ENCODE measurements at regions of chr13 and their contacts with region 1.

Region 1: DNA sequence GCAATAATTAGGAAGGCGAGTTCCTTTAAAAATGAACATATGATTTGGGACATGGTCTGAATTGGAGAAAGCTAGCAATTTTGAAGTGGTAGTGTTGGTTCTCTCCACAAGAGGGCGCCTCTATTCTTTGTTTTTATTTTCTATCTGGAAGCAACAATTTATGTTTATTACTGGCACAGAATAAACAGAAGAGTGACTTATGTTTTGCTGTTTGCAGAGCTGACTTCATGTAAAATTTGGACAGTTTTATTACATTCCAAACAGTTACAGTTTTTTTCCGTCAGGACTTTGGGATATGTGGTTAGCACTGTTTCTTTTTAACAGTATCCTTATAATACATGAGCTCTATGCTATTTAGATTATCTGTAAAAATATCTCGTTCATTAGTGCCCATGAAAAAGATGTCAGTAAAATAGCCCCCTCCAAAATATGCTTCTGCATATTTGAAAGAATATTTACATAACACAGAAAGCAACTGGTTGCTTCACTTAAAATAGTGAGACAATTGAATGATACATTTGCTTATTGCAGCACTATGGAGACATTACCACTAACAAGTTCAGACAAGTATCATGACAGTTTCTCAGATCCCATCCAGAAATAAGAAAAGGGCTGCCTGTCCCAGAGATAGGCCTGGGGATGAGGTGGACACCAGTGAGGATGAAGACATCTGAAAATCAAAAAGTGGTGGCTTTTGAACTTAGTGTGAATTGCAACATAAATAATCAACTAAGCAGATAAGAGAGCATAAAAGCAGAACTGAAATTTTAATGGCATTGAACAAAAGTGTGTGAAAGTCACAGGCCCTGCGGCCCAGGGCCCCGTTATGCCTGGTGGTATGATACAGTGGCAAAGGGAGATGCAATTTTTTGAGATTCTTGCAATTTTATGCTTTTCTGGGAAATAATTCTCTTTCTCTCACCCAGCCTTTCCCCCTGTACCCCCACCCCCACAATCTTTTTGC is 32.3 kb upstream of the FGF9 start:
- DNase-seq: no peak
- H3K4me3 ChIP-seq: no peak overlapping the region
- H3K27ac ChIP-seq: no peak overlapping the region
- H3K4me1 ChIP-seq: no peaks in the 10 kb centered on the region
- H3K27me3 ChIP-seq: no peaks in the 10 kb centered on the region
- CTCF ChIP-seq: peak; percentile 22 to 54 (median 40)
- EP300 ChIP-seq: no peak
- POLR2A ChIP-seq: no peak

Region 2: DNA sequence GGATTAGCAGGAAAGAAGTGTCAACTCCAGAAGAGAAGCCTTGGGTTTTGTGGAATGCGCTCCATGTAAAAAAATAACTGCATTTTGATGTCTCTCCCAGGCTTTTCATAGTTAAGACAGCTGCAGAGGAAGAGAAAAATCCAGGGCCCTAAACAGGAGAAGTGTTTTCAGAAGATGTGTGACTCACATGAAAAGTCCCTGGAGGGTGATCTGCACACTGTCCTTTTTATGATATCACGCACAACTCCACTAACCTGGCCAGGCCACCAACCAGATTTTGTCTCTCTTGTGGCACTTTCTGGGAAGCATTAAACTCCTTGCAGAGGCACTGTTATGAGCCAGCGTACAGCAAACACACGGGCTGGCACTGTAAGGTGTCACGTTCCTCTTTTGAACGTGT is 299.6 kb after region 1 on chr13:
- intact Hi-C with region 1: no loop called
- DNase-seq: no peak
- H3K4me3 ChIP-seq: no peak overlapping the region
- H3K27ac ChIP-seq: no peak overlapping the region
- H3K4me1 ChIP-seq: no peaks in the 10 kb centered on the region
- H3K27me3 ChIP-seq: no peaks in the 10 kb centered on the region
- CTCF ChIP-seq: no peak
- EP300 ChIP-seq: no peak
- POLR2A ChIP-seq: no peak

Region 3: GRCh38 chr13:22749626-22750025 is 1111.0 kb after region 1 on chr13:
- intact Hi-C with region 1: loop called in 3 of 4 experiments (anchors 5 to 10 kb)
- DNase-seq: no peak
- H3K4me3 ChIP-seq: no peak overlapping the region
- H3K27ac ChIP-seq: no peak overlapping the region
- H3K4me1 ChIP-seq: no peaks in the 10 kb centered on the region
- H3K27me3 ChIP-seq: no peaks in the 10 kb centered on the region
- CTCF ChIP-seq: no peak
- EP300 ChIP-seq: no peak
- POLR2A ChIP-seq: no peak

Region 4: DNA sequence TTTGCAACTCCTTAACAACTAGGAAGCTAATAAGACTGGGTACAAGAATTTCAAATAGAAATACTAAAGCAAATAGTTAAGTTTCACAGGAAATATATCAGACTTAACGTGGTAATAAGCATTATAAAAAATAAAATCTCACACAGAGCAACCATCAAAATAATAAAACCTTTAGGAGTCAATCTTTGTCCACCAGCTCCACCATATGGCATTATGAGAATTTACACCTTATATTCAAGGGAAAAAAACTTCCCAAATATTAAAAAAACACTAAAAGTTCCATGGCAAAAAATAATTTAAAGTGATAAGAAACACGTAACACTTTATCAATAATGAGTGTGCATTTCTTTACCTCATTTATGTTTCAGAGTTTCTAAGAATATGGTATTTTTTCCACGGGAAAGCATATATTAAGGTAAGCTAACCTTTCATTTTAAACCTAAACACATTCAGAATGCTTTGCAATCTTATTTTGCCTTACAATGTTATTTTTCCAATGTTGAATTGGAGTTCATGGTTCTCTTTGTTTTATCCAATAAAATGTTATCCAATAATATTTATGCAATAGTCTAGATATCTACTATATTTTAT is 1119.0 kb after region 1 on chr13:
- intact Hi-C with region 1: loop called in 3 of 4 experiments (anchors 5 to 10 kb)
- DNase-seq: no peak
- H3K4me3 ChIP-seq: no peak overlapping the region
- H3K27ac ChIP-seq: no peak overlapping the region
- H3K4me1 ChIP-seq: no peaks in the 10 kb centered on the region
- H3K27me3 ChIP-seq: no peaks in the 10 kb centered on the region
- CTCF ChIP-seq: peak in 1 of 3 donors; percentile 16
- EP300 ChIP-seq: no peak
- POLR2A ChIP-seq: no peak

Measured in ovary (tissue), 10 donors.